Activated CD8-positive, alpha-beta T cell treated with anti-CD3 and anti-CD28 coated beads, Interleukin-2, amount 10 ng/mL, durations not matched to agents 7 days and 5 days (primary cell): ENCODE measurements at regions of chr3 and their contacts with region 1.

Region 1: GRCh38 chr3:100665230-100665629 is 44.1 kb upstream of the TFG start:
- DNase-seq: peak; percentile 74
- ATAC-seq: peak; percentile 89
- H3K4me3 Mint-ChIP-seq: peak overlapping the region; percentile 37
- H3K27ac Mint-ChIP-seq: peak overlapping the region; percentile 82
- H3K4me1 Mint-ChIP-seq: peaks cover 32% of the 10 kb centered on the region
- H3K27me3 Mint-ChIP-seq: no peaks in the 10 kb centered on the region

Region 2: GRCh38 chr3:100516838-100517237 is 148.4 kb before region 1 on chr3:
- CTCF ChIA-PET with region 1: no interaction called
- POLR2A ChIA-PET with region 1: no interaction called
- DNase-seq: no peak
- ATAC-seq: no peak
- H3K4me3 Mint-ChIP-seq: no peak overlapping the region
- H3K27ac Mint-ChIP-seq: no peak overlapping the region
- H3K4me1 Mint-ChIP-seq: no peaks in the 10 kb centered on the region
- H3K27me3 Mint-ChIP-seq: no peaks in the 10 kb centered on the region

Region 3: GRCh38 chr3:100606893-100607512 is 58.2 kb before region 1 on chr3:
- CTCF ChIA-PET with region 1: no interaction called
- POLR2A ChIA-PET with region 1: no interaction called
- DNase-seq: no peak
- ATAC-seq: no peak
- H3K4me3 Mint-ChIP-seq: no peak overlapping the region
- H3K27ac Mint-ChIP-seq: no peak overlapping the region
- H3K4me1 Mint-ChIP-seq: peaks cover 31% of the 10 kb centered on the region
- H3K27me3 Mint-ChIP-seq: peaks cover 10% of the 10 kb centered on the region

Region 4: GRCh38 chr3:100650651-100651611 is 14.3 kb before region 1 on chr3:
- CTCF ChIA-PET with region 1: interaction called, 13 read pairs
- POLR2A ChIA-PET with region 1: no interaction called
- DNase-seq: peak; percentile 65
- ATAC-seq: peak; percentile 92
- H3K4me3 Mint-ChIP-seq: peak overlapping the region; percentile 54
- H3K27ac Mint-ChIP-seq: peak overlapping the region; percentile 85
- H3K4me1 Mint-ChIP-seq: peaks cover 15% of the 10 kb centered on the region
- H3K27me3 Mint-ChIP-seq: no peaks in the 10 kb centered on the region

Region 5: GRCh38 chr3:100737334-100737733 is 72.1 kb after region 1 on chr3:
- CTCF ChIA-PET with region 1: no interaction called
- POLR2A ChIA-PET with region 1: no interaction called
- DNase-seq: no peak
- ATAC-seq: peak; percentile 44
- H3K4me3 Mint-ChIP-seq: no peak overlapping the region
- H3K27ac Mint-ChIP-seq: no peak overlapping the region
- H3K4me1 Mint-ChIP-seq: peaks cover 7% of the 10 kb centered on the region
- H3K27me3 Mint-ChIP-seq: no peaks in the 10 kb centered on the region

Region 6: GRCh38 chr3:100852840-100853239 is 187.6 kb after region 1 on chr3:
- CTCF ChIA-PET with region 1: no interaction called
- POLR2A ChIA-PET with region 1: no interaction called
- DNase-seq: no peak
- ATAC-seq: no peak
- H3K4me3 Mint-ChIP-seq: no peak overlapping the region
- H3K27ac Mint-ChIP-seq: no peak overlapping the region
- H3K4me1 Mint-ChIP-seq: no peaks in the 10 kb centered on the region
- H3K27me3 Mint-ChIP-seq: peaks cover 9% of the 10 kb centered on the region